ENCODE measurements at regions of chr9 and their contacts with region 1.

Region 1: DNA sequence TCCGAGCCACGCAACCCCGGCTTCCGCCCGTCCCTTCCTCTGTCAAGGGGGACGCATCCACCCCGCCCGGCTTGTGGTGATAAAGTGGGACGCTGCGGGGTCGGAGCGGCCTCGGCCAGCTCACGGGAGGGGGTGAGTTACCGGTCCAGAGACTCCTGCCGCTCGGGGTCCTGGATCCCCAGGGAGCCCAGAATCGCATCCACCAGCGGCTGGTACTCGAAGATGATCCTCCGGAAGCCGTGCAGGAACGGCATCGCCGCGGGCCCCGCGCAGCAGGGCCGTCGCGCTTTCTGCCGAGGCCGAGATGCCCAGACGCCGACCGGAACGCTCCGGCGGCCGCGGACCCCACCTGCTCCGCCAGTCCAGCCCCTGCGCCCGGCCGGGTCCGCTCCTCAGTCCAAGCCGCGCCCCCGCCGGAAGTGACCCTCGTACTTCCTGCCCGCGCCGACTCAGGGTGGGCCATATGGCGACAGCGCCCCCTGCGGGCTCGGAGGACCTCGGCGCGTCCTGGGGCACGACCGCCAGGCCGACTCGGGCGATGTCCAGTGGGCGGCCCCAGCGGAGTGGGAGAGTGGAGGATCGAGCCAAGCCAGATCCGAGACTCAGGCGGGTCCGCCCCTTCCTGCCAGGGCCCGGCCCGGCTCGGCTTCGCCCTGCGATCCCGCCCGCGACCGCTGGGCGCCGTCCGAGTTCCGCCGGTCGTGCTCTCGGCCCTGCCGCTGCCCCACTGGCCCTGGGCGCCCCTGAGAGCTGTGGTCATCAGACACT is at the start of gene ASB6:
- DNase-seq: peak; percentile 80 to 100 (median 87)
- ATAC-seq: peak; percentile 96
- H3K4me3 ChIP-seq: peak within 1 kb of the TSS; percentile 97
- H3K4me3 Mint-ChIP-seq: peak within 1 kb of the TSS; percentile 81 to 90 (median 86)
- H3K27ac ChIP-seq: peak within 1 kb of the TSS; percentile 80
- H3K27ac Mint-ChIP-seq: peak within 1 kb of the TSS; percentile 80 to 95 (median 89)
- H3K4me1 ChIP-seq: peaks cover 16 to 18% of the 10 kb centered on the region in 2 donors
- H3K4me1 Mint-ChIP-seq: peaks cover 19 to 31% (median 23%) of the 10 kb centered on the region in 7 donors
- H3K27me3 ChIP-seq: no peaks in the 10 kb centered on the region
- H3K27me3 Mint-ChIP-seq: no peaks in the 10 kb centered on the region
- total RNA-seq, gene ASB6: 25.0 to 33.2 (median 28.1) TPM

Region 2: DNA sequence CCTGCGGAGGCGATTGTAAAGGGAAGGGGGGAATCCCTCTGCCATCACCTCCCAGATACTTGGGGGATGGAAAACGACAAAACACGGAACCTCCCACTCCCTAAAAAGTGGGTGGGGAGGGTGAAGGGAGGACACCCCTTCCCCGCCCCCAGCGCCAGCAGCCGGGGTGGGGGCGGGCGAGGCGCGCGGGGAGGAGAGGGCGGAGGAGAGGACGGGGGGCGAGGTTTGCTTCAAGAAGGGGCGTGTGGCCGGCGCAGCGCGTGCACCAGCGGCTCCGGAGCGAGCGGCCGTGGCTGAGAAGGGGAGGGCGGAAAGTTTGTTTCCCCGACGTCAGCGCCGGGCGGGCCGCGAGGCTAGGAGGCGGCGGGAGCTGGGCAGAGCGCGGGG is 23.5 kb after region 1 on chr9 and contains the start of gene PRRX2:
- CTCF ChIA-PET with region 1: no interaction called
- POLR2A ChIA-PET with region 1: no interaction called
- intact Hi-C with region 1: loop called in 1 of 2 experiments (anchors 2 kb)
- DNase-seq: peak in 6 of 9 donors; percentile 5 to 60 (median 10)
- ATAC-seq: peak; percentile 60
- H3K4me3 ChIP-seq: peak within 1 kb of the TSS; percentile 44
- H3K4me3 Mint-ChIP-seq: peak within 1 kb of the TSS; percentile 64 to 91 (median 83)
- H3K27ac ChIP-seq: no peak within 1 kb of the TSS
- H3K27ac Mint-ChIP-seq: peak within 1 kb of the TSS in 6 of 9 donors; percentile 14 to 75 (median 58)
- H3K4me1 ChIP-seq: no peaks in the 10 kb centered on the region
- H3K4me1 Mint-ChIP-seq: peaks cover 0 to 9% (median 4%) of the 10 kb centered on the region in 7 donors
- H3K27me3 ChIP-seq: no peaks in the 10 kb centered on the region
- H3K27me3 Mint-ChIP-seq: peaks cover 0 to 33% (median 17%) of the 10 kb centered on the region in 5 donors
- total RNA-seq, gene PRRX2: 1.1 TPM in 1 of 5 experiments, not detected in the others

Region 3: DNA sequence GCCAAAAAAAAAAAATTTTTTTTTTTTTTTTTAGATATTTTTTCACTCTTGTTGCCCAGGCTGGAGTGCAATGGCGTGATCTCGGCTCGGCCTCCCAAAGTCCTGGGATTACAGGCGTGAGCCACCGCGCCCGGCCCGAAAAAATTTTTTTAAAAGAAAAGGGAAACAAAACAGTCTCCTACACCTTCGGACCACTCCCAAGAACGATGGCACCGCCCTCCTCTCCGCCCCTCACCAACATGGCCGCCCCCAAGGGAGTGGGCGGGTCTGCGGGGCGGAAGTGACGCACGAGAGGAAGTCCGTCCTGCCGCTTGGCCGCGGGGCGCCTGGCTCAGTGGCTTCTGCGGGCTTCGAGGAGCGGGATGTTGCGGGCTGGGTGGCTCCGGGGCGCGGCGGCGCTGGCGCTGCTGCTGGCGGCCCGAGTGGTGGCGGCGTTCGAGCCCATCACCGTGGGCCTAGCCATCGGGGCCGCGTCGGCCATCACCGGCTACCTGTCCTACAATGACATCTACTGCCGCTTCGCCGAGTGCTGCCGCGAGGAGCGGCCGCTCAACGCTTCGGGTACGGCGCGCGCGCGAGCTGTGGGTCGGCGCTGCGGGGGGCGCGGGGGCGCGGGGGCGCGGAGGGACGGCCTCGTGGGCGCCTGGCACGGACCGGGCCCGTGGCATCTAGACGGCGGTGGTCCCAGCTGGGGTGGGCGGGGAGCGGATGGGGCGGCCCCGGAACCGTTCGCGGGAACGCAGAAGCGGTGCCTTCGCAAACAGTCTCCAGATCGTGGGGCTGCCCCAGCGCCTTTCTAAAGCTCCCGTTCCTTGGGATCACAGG is 161.1 kb after region 1 on chr9 and contains the start of gene TOR1B:
- CTCF ChIA-PET with region 1: no interaction called
- POLR2A ChIA-PET with region 1: no interaction called
- intact Hi-C with region 1: loop called in 1 of 2 experiments (anchors 1 kb)
- DNase-seq: peak; percentile 91 to 97 (median 94)
- ATAC-seq: peak; percentile 97
- H3K4me3 ChIP-seq: peak within 1 kb of the TSS; percentile 73
- H3K4me3 Mint-ChIP-seq: peak within 1 kb of the TSS; percentile 87 to 95 (median 90)
- H3K27ac ChIP-seq: peak within 1 kb of the TSS; percentile 79
- H3K27ac Mint-ChIP-seq: peak within 1 kb of the TSS; percentile 85 to 97 (median 94)
- H3K4me1 ChIP-seq: peaks cover 12 to 20% of the 10 kb centered on the region in 2 donors
- H3K4me1 Mint-ChIP-seq: peaks cover 15 to 34% (median 28%) of the 10 kb centered on the region in 7 donors
- H3K27me3 ChIP-seq: no peaks in the 10 kb centered on the region
- H3K27me3 Mint-ChIP-seq: no peaks in the 10 kb centered on the region
- total RNA-seq, gene TOR1B: 16.2 to 30.9 (median 23.9) TPM

Measured in naive thymus-derived CD4-positive, alpha-beta T cell (primary cell).